A673 (cell line): ENCODE measurements at regions of chr5 and their contacts with region 1.

Region 1: DNA sequence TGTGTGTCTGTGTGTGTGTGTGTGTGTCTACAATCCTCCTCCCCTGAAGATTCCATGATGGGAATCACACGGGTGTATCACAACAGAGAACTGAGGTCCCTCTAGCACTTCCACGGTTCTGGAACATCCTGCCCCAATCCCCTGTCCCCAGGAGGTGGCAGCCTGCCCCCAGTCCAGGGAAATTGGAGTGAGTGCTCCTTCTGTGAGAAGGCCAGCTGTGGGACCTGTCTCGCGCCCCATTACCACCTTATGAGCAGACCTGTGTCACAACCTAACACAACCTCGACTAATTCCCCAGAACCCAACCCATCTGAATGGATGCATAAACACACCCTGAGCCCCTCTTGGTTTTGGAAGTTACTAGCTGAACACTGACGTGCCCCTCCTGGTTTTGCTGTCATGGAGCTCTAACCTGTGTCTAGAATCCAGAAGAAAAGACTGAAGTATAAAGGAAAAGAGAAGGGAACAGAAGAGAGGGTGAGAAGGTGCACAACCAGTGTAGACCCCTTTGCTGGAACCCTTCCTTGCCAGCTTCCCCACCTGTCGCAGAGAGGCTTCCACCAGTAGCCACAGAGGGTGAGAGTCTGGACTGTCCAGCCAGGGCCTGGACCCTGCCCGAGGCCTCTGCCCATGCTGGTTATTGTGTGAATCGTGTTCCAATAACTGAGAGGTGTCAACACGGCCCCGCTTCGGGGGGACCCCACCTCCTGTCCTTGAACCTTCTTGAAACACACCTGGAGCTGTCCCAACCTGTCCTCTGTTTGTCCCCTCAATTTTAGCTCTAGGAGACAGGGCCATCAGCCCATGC is 3.4 kb downstream of the BTNL9 start:
- DNase-seq: no peak
- H3K4me3 ChIP-seq: no peak overlapping the region
- H3K27ac ChIP-seq: no peak overlapping the region
- H3K4me1 ChIP-seq: no peaks in the 10 kb centered on the region
- H3K27me3 ChIP-seq: peaks cover 71% of the 10 kb centered on the region
- CTCF ChIP-seq: no peak

Region 2: DNA sequence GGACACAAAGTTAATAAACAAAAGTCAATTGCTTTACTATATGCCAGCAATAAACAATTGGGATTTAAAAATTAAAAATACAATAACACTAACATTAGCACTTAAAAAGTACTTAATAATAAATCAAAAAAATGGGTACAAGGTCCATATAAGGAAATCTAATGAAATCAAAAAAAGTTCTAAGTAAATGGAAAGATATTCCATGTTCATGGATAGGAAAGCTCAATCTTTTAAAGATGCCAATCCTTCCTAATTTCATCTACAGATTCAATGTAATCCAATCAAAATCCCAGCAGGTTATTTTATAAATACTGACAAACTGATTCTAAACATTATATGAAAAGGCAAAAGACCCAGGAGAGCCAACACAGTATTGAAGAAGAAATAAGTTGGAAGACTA is 38.5 kb after region 1 on chr5:
- CTCF ChIA-PET with region 1: interaction called, 13 read pairs
- POLR2A ChIA-PET with region 1: no interaction called
- intact Hi-C with region 1: no loop called
- DNase-seq: no peak
- H3K4me3 ChIP-seq: no peak overlapping the region
- H3K27ac ChIP-seq: no peak overlapping the region
- H3K4me1 ChIP-seq: no peaks in the 10 kb centered on the region
- H3K27me3 ChIP-seq: peaks cover 53% of the 10 kb centered on the region
- CTCF ChIP-seq: no peak